ENCODE measurements at regions of chr2 and their contacts with region 1.

Region 1: GRCh38 chr2:178128836-178129630 is 16.8 kb downstream of the RBM45 start:
- DNase-seq: no peak
- H3K4me3 ChIP-seq: no peak overlapping the region
- CTCF ChIP-seq: no peak

Region 2: GRCh38 chr2:178101321-178102079 is 27.5 kb before region 1 on chr2:
- CTCF ChIA-PET with region 1: no interaction called
- POLR2A ChIA-PET with region 1: no interaction called
- DNase-seq: no peak
- H3K4me3 ChIP-seq: no peak overlapping the region
- CTCF ChIP-seq: no peak

Region 3: GRCh38 chr2:178142274-178143065 is 13.4 kb after region 1 on chr2:
- CTCF ChIA-PET with region 1: interaction called, 17 read pairs
- POLR2A ChIA-PET with region 1: no interaction called
- DNase-seq: no peak
- H3K4me3 ChIP-seq: no peak overlapping the region
- CTCF ChIP-seq: no peak

Region 4: DNA sequence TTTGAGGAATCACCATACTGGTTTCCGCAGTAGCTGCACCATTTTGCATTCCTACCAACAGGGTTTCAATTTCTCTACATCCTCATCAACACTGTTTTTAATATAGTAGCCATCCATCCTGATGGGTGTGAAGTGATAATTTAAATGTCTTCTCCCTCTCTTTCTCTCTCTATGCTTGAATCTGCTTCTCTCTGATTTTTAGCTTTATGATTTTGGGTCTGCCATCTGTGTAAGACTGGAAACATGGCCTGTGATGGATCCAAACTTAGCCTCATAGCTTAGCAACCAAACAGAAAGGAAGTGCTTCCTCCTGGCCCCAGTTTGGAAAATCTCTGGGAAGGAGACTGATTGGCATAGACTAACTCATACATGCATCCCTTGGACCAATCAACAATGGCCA is 31.6 kb after region 1 on chr2:
- CTCF ChIA-PET with region 1: no interaction called
- POLR2A ChIA-PET with region 1: no interaction called
- DNase-seq: no peak
- H3K4me3 ChIP-seq: no peak overlapping the region
- CTCF ChIP-seq: no peak

Region 5: GRCh38 chr2:178296394-178297097 is 167.5 kb after region 1 on chr2:
- CTCF ChIA-PET with region 1: interaction called, 10 read pairs
- POLR2A ChIA-PET with region 1: no interaction called
- DNase-seq: no peak
- H3K4me3 ChIP-seq: no peak overlapping the region
- CTCF ChIP-seq: no peak